ENCODE measurements at regions of chr3 and their contacts with region 1.

Region 1: DNA sequence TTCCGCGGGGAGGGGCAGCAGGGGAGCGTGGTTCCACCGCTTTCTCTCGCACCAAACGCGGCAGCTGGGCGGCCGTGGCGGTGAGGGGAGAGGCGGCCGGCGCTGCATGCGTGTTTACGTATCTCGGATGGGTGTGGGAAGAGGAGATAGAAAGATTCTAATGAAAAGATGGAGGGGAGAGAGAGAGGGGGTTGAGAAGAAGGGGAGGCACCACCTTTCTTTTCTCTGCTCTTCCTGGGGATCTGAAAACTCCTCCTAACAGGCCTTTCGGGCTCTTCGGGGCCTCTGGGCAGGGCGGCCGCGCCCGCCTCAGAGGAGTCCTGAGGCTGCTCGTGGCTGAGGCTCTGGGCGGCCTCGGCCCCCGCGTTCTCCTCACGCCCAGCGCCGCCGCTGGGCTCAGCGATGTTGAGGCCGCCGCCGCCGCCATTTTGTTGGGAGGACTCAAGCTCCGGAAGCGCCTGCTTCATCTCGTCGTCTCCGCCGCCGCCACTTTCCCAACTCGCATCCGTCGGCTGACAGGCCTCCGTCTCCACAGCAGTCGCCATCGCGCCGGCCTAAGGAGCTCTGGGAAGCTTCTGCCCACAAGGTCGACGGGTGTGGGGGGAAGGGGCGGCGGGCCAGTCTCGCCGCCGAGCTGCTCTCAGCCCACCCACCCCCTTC is 473 bp downstream of the TASOR start:
- DNase-seq: peak; percentile 65 to 91 (median 74)
- ATAC-seq: peak; percentile 69
- H3K4me3 ChIP-seq: peak overlapping the region; percentile 79
- H3K4me3 Mint-ChIP-seq: peak overlapping the region; percentile 95
- H3K27ac ChIP-seq: peak overlapping the region; percentile 98 to 99
- H3K27ac Mint-ChIP-seq: peak overlapping the region; percentile 99
- H3K4me1 ChIP-seq: peaks cover 20% of the 10 kb centered on the region
- H3K4me1 Mint-ChIP-seq: peaks cover 44% of the 10 kb centered on the region
- H3K27me3 ChIP-seq: no peaks in the 10 kb centered on the region
- H3K27me3 Mint-ChIP-seq: no peaks in the 10 kb centered on the region
- CTCF ChIP-seq: no peak

Region 2: GRCh38 chr3:56593455-56594158 is 89.0 kb before region 1 on chr3:
- CTCF ChIA-PET with region 1: no interaction called
- POLR2A ChIA-PET with region 1: interaction called, 38 read pairs
- intact Hi-C with region 1: no loop called
- DNase-seq: peak; percentile 38 to 90 (median 51)
- ATAC-seq: peak; percentile 99
- H3K4me3 ChIP-seq: peak overlapping the region; percentile 30
- H3K4me3 Mint-ChIP-seq: peak overlapping the region; percentile 75
- H3K27ac ChIP-seq: peak overlapping the region; percentile 39 to 60
- H3K27ac Mint-ChIP-seq: peak overlapping the region; percentile 95
- H3K4me1 ChIP-seq: peaks cover 26% of the 10 kb centered on the region
- H3K4me1 Mint-ChIP-seq: peaks cover 82% of the 10 kb centered on the region
- H3K27me3 ChIP-seq: no peaks in the 10 kb centered on the region
- H3K27me3 Mint-ChIP-seq: no peaks in the 10 kb centered on the region
- CTCF ChIP-seq: no peak

Region 3: GRCh38 chr3:56693750-56694149 is 11.2 kb after region 1 on chr3:
- CTCF ChIA-PET with region 1: interaction called, 3 read pairs
- POLR2A ChIA-PET with region 1: interaction called, 102 read pairs
- intact Hi-C with region 1: no loop called
- DNase-seq: peak in 3 of 14 experiments; percentile 30 to 34 (median 32)
- ATAC-seq: no peak
- H3K4me3 ChIP-seq: no peak overlapping the region
- H3K4me3 Mint-ChIP-seq: peak overlapping the region; percentile 61
- H3K27ac ChIP-seq: peak overlapping the region; percentile 16 to 42
- H3K27ac Mint-ChIP-seq: peak overlapping the region; percentile 76
- H3K4me1 ChIP-seq: peaks cover 30% of the 10 kb centered on the region
- H3K4me1 Mint-ChIP-seq: peaks cover 44% of the 10 kb centered on the region
- H3K27me3 ChIP-seq: no peaks in the 10 kb centered on the region
- H3K27me3 Mint-ChIP-seq: no peaks in the 10 kb centered on the region
- CTCF ChIP-seq: no peak

Region 4: DNA sequence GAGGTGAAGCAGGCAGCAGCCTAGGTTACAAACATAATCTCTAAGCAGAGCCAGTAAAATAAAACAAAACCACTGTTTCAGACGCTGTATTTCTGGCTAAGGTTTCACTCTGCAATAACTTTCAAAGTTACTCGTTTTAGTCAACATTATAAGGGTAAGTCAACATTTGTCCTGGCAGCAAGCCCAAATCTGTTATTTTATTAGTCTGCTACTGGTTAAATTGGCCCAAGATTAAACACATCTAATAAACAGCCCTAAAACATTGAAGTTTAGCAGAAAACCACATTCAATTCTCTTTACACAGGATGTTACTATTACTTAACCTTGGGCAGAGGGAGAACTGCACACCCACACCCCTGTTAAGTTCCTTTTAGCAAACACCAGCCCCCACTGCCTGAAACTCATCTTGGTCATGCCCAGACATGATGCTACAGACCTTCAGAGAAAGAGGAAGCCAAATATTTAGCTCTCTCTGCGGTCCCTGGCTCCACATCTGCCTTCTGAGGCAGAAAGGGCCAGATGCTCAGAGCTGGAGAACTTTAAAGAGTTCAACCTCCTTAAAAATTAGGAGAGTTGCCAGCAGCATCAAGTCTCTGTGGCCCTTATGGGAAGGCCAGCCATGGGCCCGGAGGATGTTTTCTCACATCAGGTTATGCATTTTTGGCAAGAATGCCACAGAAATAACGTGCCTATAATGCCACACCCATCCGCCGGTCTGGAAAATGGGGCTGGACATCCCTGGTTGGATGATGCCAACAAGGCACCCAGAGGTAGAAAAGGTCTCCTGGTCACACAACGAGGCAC is 101.3 kb after region 1 on chr3:
- CTCF ChIA-PET with region 1: no interaction called
- POLR2A ChIA-PET with region 1: interaction called, 19 read pairs
- intact Hi-C with region 1: no loop called
- DNase-seq: peak; percentile 40 to 92 (median 66)
- ATAC-seq: peak; percentile 83
- H3K4me3 ChIP-seq: peak overlapping the region; percentile 28
- H3K4me3 Mint-ChIP-seq: peak overlapping the region; percentile 60
- H3K27ac ChIP-seq: peak overlapping the region; percentile 82 to 87
- H3K27ac Mint-ChIP-seq: peak overlapping the region; percentile 88
- H3K4me1 ChIP-seq: peaks cover 91% of the 10 kb centered on the region
- H3K4me1 Mint-ChIP-seq: peaks cover 99% of the 10 kb centered on the region
- H3K27me3 ChIP-seq: no peaks in the 10 kb centered on the region
- H3K27me3 Mint-ChIP-seq: no peaks in the 10 kb centered on the region
- CTCF ChIP-seq: no peak

Region 5: DNA sequence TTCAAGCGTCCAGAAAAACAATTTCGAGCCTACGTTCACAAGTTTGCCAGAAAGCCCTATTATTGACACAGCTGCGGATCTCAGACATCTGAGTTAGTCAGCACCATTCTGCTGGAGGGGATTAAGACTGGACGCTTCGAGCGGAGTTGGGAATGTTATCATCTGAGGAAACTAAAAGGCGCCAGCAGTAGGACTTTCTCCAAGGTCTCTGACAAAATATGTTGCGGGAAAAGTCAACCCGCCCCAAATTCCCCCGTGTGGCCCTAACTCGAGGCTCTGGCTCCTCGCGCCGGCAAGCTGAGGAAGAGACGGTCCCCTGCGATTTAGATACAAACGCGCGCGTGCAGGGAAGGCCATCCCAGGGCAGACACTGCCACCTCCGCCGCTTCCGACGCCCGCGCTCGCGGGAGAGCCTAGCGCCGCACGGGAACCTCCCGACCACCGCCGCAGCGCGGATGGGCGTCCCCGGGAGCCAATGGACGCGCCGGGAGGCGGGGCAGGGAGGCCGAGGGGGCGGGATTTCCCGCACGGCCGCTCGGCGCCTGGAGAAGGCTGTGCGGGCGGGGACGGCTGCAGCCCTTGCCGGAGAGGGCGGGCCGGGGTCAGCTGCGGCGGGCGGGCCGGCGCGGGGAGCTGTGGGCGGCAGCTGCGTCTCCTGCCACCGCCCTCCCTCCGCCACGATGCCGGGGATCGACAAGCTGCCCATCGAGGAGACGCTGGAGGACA is 544.8 kb after region 1 on chr3 and contains the start of gene APPL1:
- CTCF ChIA-PET with region 1: no interaction called
- POLR2A ChIA-PET with region 1: interaction called, 7 read pairs
- intact Hi-C with region 1: loop called in 1 of 2 experiments (anchors 5 kb)
- DNase-seq: peak; percentile 61 to 93 (median 84)
- ATAC-seq: peak; percentile 88
- H3K4me3 ChIP-seq: peak within 1 kb of the TSS; percentile 80
- H3K4me3 Mint-ChIP-seq: peak within 1 kb of the TSS; percentile 95
- H3K27ac ChIP-seq: no peak within 1 kb of the TSS
- H3K27ac Mint-ChIP-seq: peak within 1 kb of the TSS; percentile 82
- H3K4me1 ChIP-seq: peaks cover 10% of the 10 kb centered on the region
- H3K4me1 Mint-ChIP-seq: peaks cover 33% of the 10 kb centered on the region
- H3K27me3 ChIP-seq: no peaks in the 10 kb centered on the region
- H3K27me3 Mint-ChIP-seq: no peaks in the 10 kb centered on the region
- CTCF ChIP-seq: no peak
- total RNA-seq, gene APPL1: 21.3 to 22.9 TPM